ENCODE measurements at regions of chr17 and their contacts with region 1.

Region 1: DNA sequence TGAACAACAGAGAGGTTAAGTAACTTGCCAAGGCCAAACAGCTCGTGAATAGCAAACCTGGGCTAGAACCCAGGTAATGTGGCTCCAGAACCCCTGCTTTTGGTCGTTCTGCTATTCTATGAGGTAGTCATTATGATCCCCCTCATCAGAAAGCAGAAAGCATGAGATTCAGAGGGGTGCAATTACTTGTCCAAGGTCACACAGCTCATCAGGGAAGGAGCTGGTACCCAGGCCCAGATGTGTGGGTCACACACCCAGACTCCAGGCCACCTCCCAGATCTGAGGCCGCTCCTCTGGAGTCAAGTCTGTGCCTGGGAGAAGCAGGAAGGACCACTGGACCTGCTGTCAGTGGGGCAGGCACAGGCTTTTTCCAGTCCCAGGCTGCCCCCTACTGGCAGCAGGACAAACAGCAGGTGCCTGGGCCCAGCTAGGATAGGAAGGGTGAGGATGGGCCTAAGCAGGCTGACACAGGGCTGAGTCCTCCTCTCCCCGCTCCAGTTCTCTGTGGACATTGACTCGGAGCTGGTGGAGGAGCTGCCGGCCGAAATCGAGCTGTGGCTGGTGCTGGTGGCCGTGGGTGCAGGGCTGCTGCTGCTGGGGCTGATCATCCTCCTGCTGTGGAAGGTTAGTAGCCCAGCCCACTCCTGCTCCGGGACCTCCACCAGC is 7.8 kb upstream of the PDK2 start:
- DNase-seq: peak; percentile 86
- ATAC-seq: peak; percentile 90
- H3K4me3 Mint-ChIP-seq: no peak overlapping the region
- H3K27ac Mint-ChIP-seq: no peak overlapping the region
- H3K4me1 Mint-ChIP-seq: no peaks in the 10 kb centered on the region
- H3K27me3 Mint-ChIP-seq: no peaks in the 10 kb centered on the region

Region 2: DNA sequence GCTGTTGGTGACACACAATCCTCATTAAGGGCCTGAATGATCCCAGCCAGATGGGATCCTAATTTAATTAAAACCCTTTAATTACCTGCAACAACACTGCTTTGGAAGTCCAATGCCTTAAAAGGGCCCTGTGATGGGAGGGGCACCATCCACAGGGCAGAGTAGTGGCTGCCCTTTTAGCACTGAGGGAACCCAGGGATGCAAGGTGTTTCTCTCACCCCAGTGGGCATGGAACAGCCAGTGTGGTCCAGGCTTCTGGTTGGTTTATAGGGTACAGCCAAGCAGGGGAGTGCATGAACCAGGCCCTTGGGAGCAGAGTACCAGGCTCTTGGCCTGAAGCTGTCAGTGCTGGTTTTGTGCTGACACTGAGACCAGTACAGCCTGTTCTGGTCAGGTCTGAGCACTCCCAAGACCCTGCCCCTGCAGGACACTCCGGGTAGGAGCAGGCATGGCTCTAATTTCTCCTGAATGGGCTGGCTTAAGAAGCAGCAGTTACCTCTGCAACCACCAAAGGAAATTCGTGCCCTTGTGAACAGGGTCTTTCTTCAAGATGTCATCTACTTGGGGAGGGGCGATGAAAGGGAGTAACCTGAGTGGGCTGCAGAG is 501.9 kb before region 1 on chr17:
- CTCF ChIA-PET with region 1: no interaction called
- DNase-seq: no peak
- ATAC-seq: no peak
- H3K4me3 Mint-ChIP-seq: no peak overlapping the region
- H3K27ac Mint-ChIP-seq: no peak overlapping the region
- H3K4me1 Mint-ChIP-seq: peaks cover 3% of the 10 kb centered on the region
- H3K27me3 Mint-ChIP-seq: no peaks in the 10 kb centered on the region

Region 3: GRCh38 chr17:50026901-50027630 is 60.3 kb before region 1 on chr17:
- CTCF ChIA-PET with region 1: interaction called, 149 read pairs
- DNase-seq: peak; percentile 79
- ATAC-seq: peak; percentile 74
- H3K4me3 Mint-ChIP-seq: no peak overlapping the region
- H3K27ac Mint-ChIP-seq: no peak overlapping the region
- H3K4me1 Mint-ChIP-seq: peaks cover 14% of the 10 kb centered on the region
- H3K27me3 Mint-ChIP-seq: peaks cover 26% of the 10 kb centered on the region